Gastrocnemius medialis (tissue), 4 donors: ENCODE measurements at regions of chr6 and their contacts with region 1.

Region 1: DNA sequence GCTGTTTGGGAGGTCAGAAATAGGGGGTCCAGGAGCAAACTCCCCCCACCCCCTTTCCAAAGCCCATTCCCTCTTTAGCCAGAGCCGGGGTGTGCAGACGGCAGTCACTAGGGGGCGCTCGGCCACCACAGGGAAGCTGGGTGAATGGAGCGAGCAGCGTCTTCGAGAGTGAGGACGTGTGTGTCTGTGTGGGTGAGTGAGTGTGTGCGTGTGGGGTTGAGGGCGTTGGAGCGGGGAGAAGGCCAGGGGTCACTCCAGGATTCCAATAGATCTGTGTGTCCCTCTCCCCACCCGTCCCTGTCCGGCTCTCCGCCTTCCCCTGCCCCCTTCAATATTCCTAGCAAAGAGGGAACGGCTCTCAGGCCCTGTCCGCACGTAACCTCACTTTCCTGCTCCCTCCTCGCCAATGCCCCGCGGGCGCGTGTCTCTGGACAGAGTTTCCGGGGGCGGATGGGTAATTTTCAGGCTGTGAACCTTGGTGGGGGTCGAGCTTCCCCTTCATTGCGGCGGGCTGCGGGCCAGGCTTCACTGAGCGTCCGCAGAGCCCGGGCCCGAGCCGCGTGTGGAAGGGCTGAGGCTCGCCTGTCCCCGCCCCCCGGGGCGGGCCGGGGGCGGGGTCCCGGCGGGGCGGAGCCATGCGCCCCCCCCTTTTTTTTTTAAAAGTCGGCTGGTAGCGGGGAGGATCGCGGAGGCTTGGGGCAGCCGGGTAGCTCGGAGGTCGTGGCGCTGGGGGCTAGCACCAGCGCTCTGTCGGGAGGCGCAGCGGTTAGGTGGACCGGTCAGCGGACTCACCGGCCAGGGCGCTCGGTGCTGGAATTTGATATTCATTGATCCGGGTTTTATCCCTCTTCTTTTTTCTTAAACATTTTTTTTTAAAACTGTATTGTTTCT is at the start of gene VEGFA:
- DNase-seq: peak; percentile 80 to 89
- ATAC-seq: peak; percentile 51 to 55
- H3K4me3 ChIP-seq: peak within 1 kb of the TSS; percentile 74 to 91 (median 85)
- H3K27ac ChIP-seq: peak within 1 kb of the TSS; percentile 94 to 100 (median 98)
- H3K4me1 ChIP-seq: peaks cover 4 to 20% of the 10 kb centered on the region in 2 donors
- H3K27me3 ChIP-seq: no peaks in the 10 kb centered on the region
- CTCF ChIP-seq: peak; percentile 99 to 100 (median 99)
- POLR2A ChIP-seq: peak; percentile 97 to 98
- total RNA-seq, gene VEGFA: 66.4 to 195 (median 149) TPM

Region 2: GRCh38 chr6:43667245-43668150 is 102.3 kb before region 1 on chr6:
- in situ Hi-C with region 1: loop called in 2 of 4 experiments (anchors 10 kb)
- intact Hi-C with region 1: loop called (anchors 2 kb)
- DNase-seq: peak; percentile 62 to 85
- ATAC-seq: peak; percentile 67 to 69
- H3K4me3 ChIP-seq: peak overlapping the region in 3 of 4 donors; percentile 17 to 30 (median 18)
- H3K27ac ChIP-seq: peak overlapping the region; percentile 95 to 97 (median 96)
- H3K4me1 ChIP-seq: peaks cover 54 to 59% of the 10 kb centered on the region in 2 donors
- H3K27me3 ChIP-seq: no peaks in the 10 kb centered on the region
- CTCF ChIP-seq: peak; percentile 98
- POLR2A ChIP-seq: peak in 1 of 2 donors; percentile 34

Region 3: GRCh38 chr6:43809417-43810291 is 39.9 kb after region 1 on chr6:
- in situ Hi-C with region 1: loop called in 1 of 4 experiments (anchors 5 kb)
- intact Hi-C with region 1: no loop called
- DNase-seq: no peak
- ATAC-seq: no peak
- H3K4me3 ChIP-seq: no peak overlapping the region
- H3K27ac ChIP-seq: peak overlapping the region in 3 of 4 donors; percentile 85 to 95 (median 91)
- H3K4me1 ChIP-seq: peaks cover 29 to 31% of the 10 kb centered on the region in 2 donors
- H3K27me3 ChIP-seq: no peaks in the 10 kb centered on the region
- CTCF ChIP-seq: no peak
- POLR2A ChIP-seq: no peak

Region 4: DNA sequence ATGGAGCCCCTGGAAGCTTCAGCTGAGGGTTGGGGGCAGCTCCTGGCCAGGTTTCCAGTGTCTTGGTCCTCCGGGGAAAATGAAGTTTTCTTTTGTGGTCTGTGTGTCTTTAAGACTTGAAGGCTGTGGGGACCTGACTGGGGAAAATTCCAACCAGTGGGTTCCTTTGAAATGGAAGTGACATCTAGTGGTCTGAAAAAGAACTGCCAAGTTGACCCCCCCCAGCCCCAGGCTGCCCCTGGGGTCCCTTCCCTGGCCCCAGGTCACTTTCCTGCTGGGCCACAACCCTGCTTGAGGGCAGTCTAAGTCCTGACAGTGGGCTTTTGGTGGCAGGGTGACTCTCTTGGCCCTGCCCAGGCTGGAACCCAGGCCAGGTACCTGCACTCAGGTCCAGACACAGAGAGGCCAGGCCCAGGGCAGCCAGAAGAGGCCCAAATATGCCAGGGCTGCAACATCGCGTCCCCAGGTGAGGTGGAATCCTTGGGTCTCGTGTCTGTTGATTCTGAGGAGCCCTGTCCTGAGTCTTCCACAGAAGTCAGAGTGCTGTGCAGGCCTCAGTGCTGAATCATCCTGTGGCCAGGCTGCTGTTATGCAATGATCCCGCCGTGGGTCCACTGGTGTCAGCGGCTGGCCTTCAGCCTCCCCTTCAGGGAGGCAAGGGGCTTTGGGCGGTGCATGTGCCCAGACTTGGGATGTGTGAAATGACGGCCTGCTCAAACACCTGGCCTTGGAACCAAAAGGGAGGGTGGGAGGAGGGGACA is 68.7 kb after region 1 on chr6:
- in situ Hi-C with region 1: no loop called
- intact Hi-C with region 1: loop called (anchors 1 kb)
- DNase-seq: peak; percentile 23 to 68
- ATAC-seq: peak; percentile 74 to 87
- H3K4me3 ChIP-seq: no peak overlapping the region
- H3K27ac ChIP-seq: peak overlapping the region; percentile 6 to 63 (median 51)
- H3K4me1 ChIP-seq: peaks cover 4 to 15% of the 10 kb centered on the region in 2 donors
- H3K27me3 ChIP-seq: no peaks in the 10 kb centered on the region
- CTCF ChIP-seq: peak; percentile 44 to 70 (median 53)
- POLR2A ChIP-seq: no peak

Region 5: DNA sequence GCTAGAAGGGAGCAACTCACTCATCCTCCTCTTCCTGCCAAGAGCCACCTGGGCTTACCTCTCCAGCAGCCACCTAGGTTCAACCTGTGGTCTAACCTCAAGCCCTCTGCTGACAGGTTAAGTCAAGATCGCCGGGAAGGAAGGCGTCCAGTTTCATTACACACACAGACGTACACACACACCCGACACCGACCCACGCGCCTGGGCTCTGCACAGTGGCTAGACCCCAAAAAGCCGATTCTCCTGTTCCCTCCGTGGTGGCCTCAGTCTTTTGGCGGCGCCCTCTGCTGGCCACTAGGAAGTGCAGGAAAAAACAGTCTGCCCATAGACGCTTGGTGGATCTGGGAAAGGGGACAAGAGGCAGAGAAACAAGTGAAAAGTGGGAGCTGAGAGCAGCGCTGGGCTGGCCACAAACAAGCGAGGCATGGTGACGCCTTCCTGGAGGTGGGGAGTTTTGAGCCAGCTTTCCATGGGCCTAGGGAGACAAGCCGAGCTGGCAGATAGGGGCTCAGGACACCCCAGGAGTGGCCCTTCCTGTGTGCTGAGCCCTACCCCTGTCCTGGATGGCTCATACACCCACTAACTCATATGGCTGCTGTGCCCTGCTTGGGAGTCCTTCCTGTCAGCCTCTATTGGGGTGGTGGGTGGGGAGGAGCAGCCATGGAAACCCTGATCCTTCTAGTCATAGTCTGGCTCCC is 304.8 kb after region 1 on chr6:
- in situ Hi-C with region 1: loop called (anchors 5 kb)
- intact Hi-C with region 1: loop called (anchors 1 kb)
- DNase-seq: peak; percentile 54 to 83
- ATAC-seq: peak; percentile 51 to 57
- H3K4me3 ChIP-seq: peak overlapping the region in 1 of 4 donors; percentile 21
- H3K27ac ChIP-seq: peak overlapping the region; percentile 81 to 93 (median 90)
- H3K4me1 ChIP-seq: peaks cover 32 to 41% of the 10 kb centered on the region in 2 donors
- H3K27me3 ChIP-seq: no peaks in the 10 kb centered on the region
- CTCF ChIP-seq: peak; percentile 89 to 94 (median 93)
- POLR2A ChIP-seq: no peak

Region 6: GRCh38 chr6:44246663-44247337 is 477.0 kb after region 1 on chr6 and contains the start of gene HSP90AB1:
- in situ Hi-C with region 1: no loop called
- intact Hi-C with region 1: loop called (anchors 5 kb)
- DNase-seq: peak; percentile 97 to 99
- ATAC-seq: peak; percentile 86 to 88
- H3K4me3 ChIP-seq: peak within 1 kb of the TSS; percentile 78 to 98 (median 88)
- H3K27ac ChIP-seq: peak within 1 kb of the TSS; percentile 93 to 99 (median 98)
- H3K4me1 ChIP-seq: peaks cover 25 to 27% of the 10 kb centered on the region in 2 donors
- H3K27me3 ChIP-seq: no peaks in the 10 kb centered on the region
- CTCF ChIP-seq: peak in 1 of 5 experiments; percentile 26
- POLR2A ChIP-seq: peak; percentile 99
- total RNA-seq, gene HSP90AB1: 878 to 1,576 (median 1,106) TPM